ENCODE measurements at regions of chr13 and their contacts with region 1.

Region 1: GRCh38 chr13:31161828-31162590 is at the start of gene HSPH1:
- H3K4me3 Mint-ChIP-seq: peak within 1 kb of the TSS; percentile 99
- H3K27ac Mint-ChIP-seq: peak within 1 kb of the TSS; percentile 96
- H3K4me1 Mint-ChIP-seq: peaks cover 30% of the 10 kb centered on the region
- H3K27me3 Mint-ChIP-seq: no peaks in the 10 kb centered on the region

Region 2: DNA sequence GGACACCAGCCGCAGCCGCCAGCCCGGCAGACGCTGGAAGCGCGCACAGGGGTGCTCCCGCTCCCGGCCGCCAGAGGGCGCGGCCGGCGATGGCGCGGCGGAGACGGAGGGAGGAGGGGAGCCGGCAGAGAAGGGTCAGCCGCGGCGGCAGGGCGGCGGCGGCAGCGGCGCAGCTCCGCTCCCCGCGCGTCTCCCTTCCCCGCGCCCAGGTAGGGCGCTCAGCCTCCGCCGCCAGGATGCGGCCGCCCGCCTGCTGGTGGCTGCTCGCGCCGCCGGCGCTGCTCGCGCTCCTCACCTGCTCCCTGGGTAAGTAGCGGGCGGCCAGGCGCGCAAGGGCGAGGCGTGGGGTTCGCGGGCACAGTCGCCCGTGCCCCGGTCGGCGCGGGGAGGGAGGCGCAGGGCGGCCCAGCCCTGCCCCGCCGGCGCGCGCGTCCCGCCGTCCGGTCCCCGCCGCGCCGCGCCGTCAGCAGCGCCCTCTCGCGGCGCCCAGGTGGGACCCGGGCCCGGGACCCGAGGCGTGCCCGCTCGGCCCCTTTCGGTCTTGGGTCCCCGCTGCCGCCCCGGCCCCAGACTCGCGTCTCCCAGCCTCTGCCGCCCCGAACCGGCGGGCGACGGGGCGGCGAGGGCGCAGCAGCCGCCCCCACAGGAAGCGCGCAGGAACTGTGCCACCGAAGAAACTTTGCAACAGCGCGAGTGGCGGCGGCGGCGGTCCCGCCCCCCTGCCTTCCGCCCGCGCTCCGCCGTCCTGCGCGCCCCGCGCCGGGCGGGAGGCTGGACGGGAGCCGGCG is 38.0 kb after region 1 on chr13 and contains the start of gene B3GLCT:
- intact Hi-C with region 1: loop called (anchors 2 kb)
- H3K4me3 Mint-ChIP-seq: peak within 1 kb of the TSS; percentile 77
- H3K27ac Mint-ChIP-seq: peak within 1 kb of the TSS; percentile 81
- H3K4me1 Mint-ChIP-seq: peaks cover 53% of the 10 kb centered on the region
- H3K27me3 Mint-ChIP-seq: peaks cover 4% of the 10 kb centered on the region